PC-3 (cell line): ENCODE measurements at regions of chr7 and their contacts with region 1.

Region 1: GRCh38 chr7:15816835-15817426 is 130.4 kb upstream of the MEOX2 start:
- DNase-seq: no peak
- ATAC-seq: no peak
- H3K4me3 ChIP-seq: no peak overlapping the region
- H3K27ac ChIP-seq: no peak overlapping the region
- H3K4me1 ChIP-seq: no peaks in the 10 kb centered on the region
- H3K27me3 ChIP-seq: no peaks in the 10 kb centered on the region
- CTCF ChIP-seq: no peak

Region 2: GRCh38 chr7:15853832-15854470 is 37.0 kb after region 1 on chr7:
- CTCF ChIA-PET with region 1: no interaction called
- POLR2A ChIA-PET with region 1: no interaction called
- intact Hi-C with region 1: no loop called
- DNase-seq: no peak
- ATAC-seq: no peak
- H3K4me3 ChIP-seq: no peak overlapping the region
- H3K27ac ChIP-seq: no peak overlapping the region
- H3K4me1 ChIP-seq: no peaks in the 10 kb centered on the region
- H3K27me3 ChIP-seq: no peaks in the 10 kb centered on the region
- CTCF ChIP-seq: no peak

Region 3: GRCh38 chr7:15863951-15864625 is 47.2 kb after region 1 on chr7:
- CTCF ChIA-PET with region 1: no interaction called
- POLR2A ChIA-PET with region 1: no interaction called
- intact Hi-C with region 1: no loop called
- DNase-seq: no peak
- ATAC-seq: no peak
- H3K4me3 ChIP-seq: no peak overlapping the region
- H3K27ac ChIP-seq: no peak overlapping the region
- H3K4me1 ChIP-seq: no peaks in the 10 kb centered on the region
- H3K27me3 ChIP-seq: no peaks in the 10 kb centered on the region
- CTCF ChIP-seq: no peak

Region 4: DNA sequence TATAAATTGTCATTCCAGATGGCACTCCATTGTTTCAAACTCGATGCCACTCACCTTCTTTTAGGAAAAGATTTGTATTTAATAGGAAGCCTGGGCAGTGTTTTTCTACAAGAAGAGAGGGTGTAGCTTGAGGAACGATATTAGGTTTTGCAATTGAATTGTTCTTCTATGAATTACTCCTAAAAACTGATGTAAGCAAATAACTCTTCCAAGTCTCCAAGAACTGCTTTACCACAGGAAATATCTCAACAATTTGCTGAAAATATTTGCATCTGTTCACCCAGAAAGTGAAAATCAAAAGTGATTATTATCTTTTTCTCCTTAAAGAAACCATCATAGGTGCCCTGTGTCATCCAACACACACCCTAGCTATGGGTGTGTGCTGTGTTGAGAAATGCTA is 130.8 kb after region 1 on chr7:
- CTCF ChIA-PET with region 1: no interaction called
- POLR2A ChIA-PET with region 1: interaction called, 10 read pairs
- intact Hi-C with region 1: no loop called
- DNase-seq: no peak
- ATAC-seq: no peak
- H3K4me3 ChIP-seq: no peak overlapping the region
- H3K27ac ChIP-seq: no peak overlapping the region
- H3K4me1 ChIP-seq: no peaks in the 10 kb centered on the region
- H3K27me3 ChIP-seq: no peaks in the 10 kb centered on the region
- CTCF ChIP-seq: no peak